Activated CD4-positive, alpha-beta memory T cell treated with anti-CD3 and anti-CD28 coated beads for 36 hours (primary cell): ENCODE measurements at regions of chr9 and their contacts with region 1.

Region 1: DNA sequence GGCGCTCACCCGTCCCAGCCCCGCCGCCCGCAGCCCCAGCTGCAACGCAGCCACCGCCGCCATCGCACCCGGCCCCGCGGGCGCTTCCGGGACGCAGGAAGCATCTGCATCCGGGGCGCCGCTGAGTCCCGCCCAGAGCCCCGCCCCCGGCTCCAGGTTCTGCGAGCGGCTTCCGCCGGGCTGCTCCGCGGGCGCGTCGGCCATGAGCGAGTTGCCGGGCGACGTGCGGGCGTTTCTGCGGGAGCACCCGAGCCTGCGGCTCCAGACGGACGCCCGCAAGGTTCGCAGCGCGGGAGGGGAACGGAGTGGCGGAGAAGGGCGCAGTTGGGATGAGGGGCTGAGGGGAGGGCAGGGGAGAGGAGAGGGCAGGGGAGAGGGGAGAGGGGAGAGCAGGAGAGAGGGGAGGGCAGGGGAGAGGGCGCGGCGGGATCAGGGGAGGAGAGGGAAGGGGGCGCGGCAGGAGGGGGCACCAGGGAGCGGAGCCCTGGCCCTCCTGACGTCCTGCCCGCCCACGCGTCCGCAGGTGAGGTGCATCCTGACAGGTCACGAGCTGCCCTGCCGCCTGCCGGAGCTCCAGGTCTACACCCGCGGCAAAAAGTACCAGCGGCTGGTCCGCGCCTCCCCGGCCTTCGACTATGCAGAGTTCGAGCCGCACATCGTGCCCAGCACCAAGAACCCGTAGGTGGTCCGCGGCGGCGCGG is at the starts of genes SURF1 and SURF2:
- DNase-seq: peak; percentile 93
- H3K4me3 Mint-ChIP-seq: peak within 1 kb of the TSS; percentile 84
- H3K27ac Mint-ChIP-seq: peak within 1 kb of the TSS; percentile 81
- H3K4me1 Mint-ChIP-seq: peaks cover 53% of the 10 kb centered on the region
- H3K27me3 Mint-ChIP-seq: no peaks in the 10 kb centered on the region
- total RNA-seq, gene SURF1: 24.7 to 26.0 TPM
- total RNA-seq, gene SURF2: 12.5 to 15.5 TPM

Region 2: GRCh38 chr9:133368249-133368881 is 11.8 kb after region 1 on chr9:
- CTCF ChIA-PET with region 1: interaction called, 76 read pairs
- POLR2A ChIA-PET with region 1: interaction called, 381 read pairs
- intact Hi-C with region 1: loop called (anchors 1 kb)
- DNase-seq: no peak
- H3K4me3 Mint-ChIP-seq: peak overlapping the region; percentile 63
- H3K27ac Mint-ChIP-seq: peak overlapping the region; percentile 96
- H3K4me1 Mint-ChIP-seq: peaks cover 65% of the 10 kb centered on the region
- H3K27me3 Mint-ChIP-seq: no peaks in the 10 kb centered on the region

Region 3: GRCh38 chr9:133406480-133407307 is 50.2 kb after region 1 on chr9:
- CTCF ChIA-PET with region 1: interaction called, 4 read pairs
- POLR2A ChIA-PET with region 1: no interaction called
- intact Hi-C with region 1: loop called (anchors 10 kb)
- DNase-seq: peak; percentile 92
- H3K4me3 Mint-ChIP-seq: no peak overlapping the region
- H3K27ac Mint-ChIP-seq: peak overlapping the region; percentile 83
- H3K4me1 Mint-ChIP-seq: peaks cover 14% of the 10 kb centered on the region
- H3K27me3 Mint-ChIP-seq: no peaks in the 10 kb centered on the region

Region 4: DNA sequence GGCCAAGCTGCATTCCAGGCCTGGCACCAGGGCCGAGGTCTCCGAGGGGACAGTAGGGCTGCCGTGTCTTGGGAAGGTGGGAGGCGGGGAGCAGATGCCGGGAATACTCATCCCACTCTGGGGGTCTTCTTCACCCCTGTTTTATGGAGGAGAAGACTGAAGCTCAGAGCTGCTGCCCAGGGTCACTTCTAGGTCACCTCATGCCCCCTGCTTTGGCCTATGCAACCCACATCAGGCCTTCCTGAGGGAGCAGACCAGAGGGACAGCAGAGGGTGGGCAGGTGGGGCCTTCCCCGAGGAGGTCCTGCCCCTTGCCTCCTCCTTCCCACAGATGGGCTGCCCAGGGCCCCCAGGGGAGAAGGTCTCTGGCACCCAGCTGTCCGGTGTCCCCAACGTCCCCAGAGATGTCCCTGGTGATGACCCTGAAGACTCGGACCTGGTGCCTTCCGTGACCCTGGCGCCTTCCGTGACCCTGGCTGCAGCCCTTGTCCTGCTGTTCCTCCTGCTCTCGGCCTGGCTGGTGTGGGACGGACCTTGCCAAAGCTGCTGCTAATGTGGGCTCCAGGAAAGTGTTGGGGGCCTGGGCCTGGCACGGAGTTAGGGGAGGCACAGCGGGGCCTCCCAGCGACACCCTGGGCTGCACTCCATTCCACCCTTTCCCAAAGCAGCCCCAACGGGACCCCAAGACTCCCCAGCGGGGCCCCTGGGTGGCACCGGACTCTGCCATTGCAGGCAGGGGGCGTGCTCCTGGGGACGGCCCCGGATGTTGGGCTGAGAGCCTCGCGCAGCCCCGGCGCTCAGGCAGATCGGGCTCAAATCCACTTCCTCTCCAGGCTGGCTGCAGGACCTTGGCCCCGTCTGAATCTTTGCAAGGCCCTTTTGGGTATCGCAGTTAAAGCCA is 129.1 kb after region 1 on chr9:
- CTCF ChIA-PET with region 1: interaction called, 5 read pairs
- POLR2A ChIA-PET with region 1: no interaction called
- intact Hi-C with region 1: loop called (anchors 10 kb)
- DNase-seq: no peak
- H3K4me3 Mint-ChIP-seq: no peak overlapping the region
- H3K27ac Mint-ChIP-seq: no peak overlapping the region
- H3K4me1 Mint-ChIP-seq: no peaks in the 10 kb centered on the region
- H3K27me3 Mint-ChIP-seq: peaks cover 14% of the 10 kb centered on the region